Body of pancreas (tissue), 4 donors: ENCODE measurements at regions of chr11 and their contacts with region 1.

Region 1: DNA sequence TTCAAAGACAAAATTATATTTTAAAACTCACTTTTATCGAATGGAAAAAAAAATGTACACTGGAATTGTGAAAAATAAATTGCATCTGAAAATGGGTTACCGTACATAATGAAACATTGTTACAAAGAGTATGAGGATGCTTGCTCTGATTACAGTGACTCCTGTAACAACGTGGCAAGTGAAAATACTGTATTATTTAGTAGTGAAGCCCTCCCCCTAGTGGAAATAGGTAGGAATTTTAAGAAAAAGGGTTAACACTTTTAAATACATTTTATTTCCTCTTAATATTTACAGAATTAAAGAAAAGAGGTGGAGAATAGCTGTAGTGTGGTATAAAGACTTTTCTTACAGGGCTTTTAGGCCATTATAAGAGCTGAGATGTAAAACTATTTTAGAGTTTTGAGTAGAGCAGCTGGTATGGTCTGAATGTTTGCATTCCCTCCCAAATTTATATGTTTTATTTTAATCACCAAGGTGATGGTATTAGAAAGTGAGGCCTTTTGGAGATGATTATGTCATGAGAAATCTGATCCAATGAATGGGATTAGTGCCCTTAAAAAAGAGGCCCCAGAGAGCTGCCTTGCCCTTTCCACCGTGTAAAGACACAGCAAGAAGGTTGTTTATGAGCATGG is 25.2 kb downstream of the FAM76B start:
- DNase-seq: no peak
- ATAC-seq: peak; percentile 81
- H3K4me3 ChIP-seq: no peak overlapping the region
- H3K27ac ChIP-seq: no peak overlapping the region
- H3K4me1 ChIP-seq: no peaks in the 10 kb centered on the region
- H3K27me3 ChIP-seq: no peaks in the 10 kb centered on the region
- CTCF ChIP-seq: peak; percentile 47 to 76 (median 73)
- POLR2A ChIP-seq: no peak

Region 2: DNA sequence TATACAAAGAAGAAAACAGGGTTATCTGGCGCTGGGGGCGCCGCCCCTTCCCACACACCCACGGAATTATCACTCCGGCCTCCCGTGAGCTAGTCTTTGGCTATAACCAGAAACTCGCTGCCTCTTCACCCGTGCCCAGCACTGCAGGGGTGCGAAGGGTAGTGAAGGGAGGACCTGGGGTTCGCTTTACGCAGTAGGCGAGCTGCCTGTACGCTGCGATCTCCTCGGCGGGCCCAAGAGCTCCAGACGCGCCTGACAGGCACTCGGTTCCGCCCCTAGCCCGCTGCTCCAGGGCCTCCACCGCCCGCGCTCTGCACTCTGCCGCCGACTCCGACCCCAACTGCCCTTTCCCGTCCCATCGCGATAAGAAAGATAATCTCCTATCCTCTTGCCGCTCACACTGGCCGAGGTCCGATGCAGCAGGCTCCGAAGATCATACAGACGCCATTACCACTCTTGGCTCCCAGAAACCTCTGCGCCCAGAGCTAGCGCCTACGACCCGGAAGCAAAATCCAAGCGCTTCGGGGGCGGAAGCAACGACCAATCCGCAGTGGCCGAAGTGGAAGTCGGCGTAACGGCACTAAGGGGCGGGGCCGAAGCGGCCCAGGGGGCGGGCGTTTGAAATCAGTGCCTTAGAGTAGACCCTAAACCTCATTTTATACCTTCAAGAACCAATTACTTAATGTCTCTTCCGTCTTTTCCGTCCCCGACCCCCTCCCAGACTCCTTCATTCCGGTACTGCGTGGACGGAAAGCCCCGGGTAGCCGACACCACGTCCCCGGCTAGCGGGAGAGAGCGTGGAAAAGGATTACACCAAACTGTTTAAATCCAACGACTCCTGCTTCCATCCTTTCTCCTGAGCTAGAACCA is 791.0 kb before region 1 on chr11 and contains the starts of genes CWC15 and KDM4D:
- intact Hi-C with region 1: loop called (anchors 10 kb)
- DNase-seq: peak; percentile 92 to 94 (median 94)
- ATAC-seq: peak; percentile 100
- H3K4me3 ChIP-seq: peak within 1 kb of the TSS; percentile 63 to 79
- H3K27ac ChIP-seq: peak within 1 kb of the TSS in 3 of 4 donors; percentile 70 to 79 (median 77)
- H3K4me1 ChIP-seq: peaks cover 19% of the 10 kb centered on the region
- H3K27me3 ChIP-seq: no peaks in the 10 kb centered on the region
- CTCF ChIP-seq: no peak
- POLR2A ChIP-seq: peak; percentile 29 to 77 (median 77)
- total RNA-seq, gene CWC15: 19.2 to 38.6 TPM
- total RNA-seq, gene KDM4D: 0.78 TPM in 1 of 2 donors, not detected in the other

Region 3: DNA sequence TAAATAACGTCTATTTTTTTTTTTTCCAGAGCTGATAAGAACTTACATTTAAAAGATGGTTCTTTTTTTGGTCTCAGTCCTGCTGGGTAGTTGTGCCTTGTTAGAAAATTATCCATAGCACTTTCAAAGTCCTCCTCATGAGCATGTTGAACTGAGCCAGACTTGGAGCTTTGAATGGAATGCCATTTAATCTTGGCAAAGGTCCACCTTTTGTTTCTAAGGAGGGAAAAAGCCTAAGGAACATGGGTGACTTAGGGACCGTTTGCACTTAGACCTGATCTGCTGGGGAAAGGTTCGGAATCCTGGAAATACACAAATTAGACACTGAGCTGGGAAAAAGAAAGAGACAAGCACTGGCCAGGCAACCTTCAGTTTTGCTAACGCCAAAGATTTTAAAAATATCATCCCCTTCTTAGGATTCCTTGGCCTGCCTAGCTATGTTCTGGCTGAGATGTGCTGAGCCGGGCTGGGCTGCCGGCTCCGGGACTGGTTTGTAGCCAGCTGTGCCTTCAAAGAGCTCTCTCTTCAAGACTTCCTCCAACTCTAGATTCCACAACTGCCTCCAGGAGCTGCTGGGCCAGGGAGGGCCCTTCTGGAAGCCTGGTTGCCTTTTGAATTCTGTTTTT is 607.4 kb before region 1 on chr11:
- intact Hi-C with region 1: loop called (anchors 5 kb)
- DNase-seq: peak in 1 of 4 donors; percentile 14
- ATAC-seq: peak; percentile 34
- H3K4me3 ChIP-seq: no peak overlapping the region
- H3K27ac ChIP-seq: no peak overlapping the region
- H3K4me1 ChIP-seq: no peaks in the 10 kb centered on the region
- H3K27me3 ChIP-seq: no peaks in the 10 kb centered on the region
- CTCF ChIP-seq: no peak
- POLR2A ChIP-seq: no peak